ENCODE measurements at regions of chr3 and their contacts with region 1.

Region 1: GRCh38 chr3:256501-256900 is 59.9 kb downstream of the CHL1 start:
- DNase-seq: no peak
- H3K4me3 ChIP-seq: no peak overlapping the region
- CTCF ChIP-seq: no peak

Region 2: GRCh38 chr3:359672-360071 is 103.2 kb after region 1 on chr3:
- in situ Hi-C with region 1: loop called (anchors 5 kb)
- DNase-seq: no peak
- H3K4me3 ChIP-seq: no peak overlapping the region
- CTCF ChIP-seq: no peak

Measured in astrocyte of the cerebellum (primary cell).